ENCODE measurements at regions of chr2 and their contacts with region 1.

Region 1: GRCh38 chr2:70336552-70336951 is 34.7 kb upstream of the FAM136A start:
- DNase-seq: no peak
- H3K4me3 ChIP-seq: no peak overlapping the region
- H3K27ac ChIP-seq: no peak overlapping the region
- H3K4me1 ChIP-seq: no peaks in the 10 kb centered on the region
- H3K27me3 ChIP-seq: no peaks in the 10 kb centered on the region

Region 2: DNA sequence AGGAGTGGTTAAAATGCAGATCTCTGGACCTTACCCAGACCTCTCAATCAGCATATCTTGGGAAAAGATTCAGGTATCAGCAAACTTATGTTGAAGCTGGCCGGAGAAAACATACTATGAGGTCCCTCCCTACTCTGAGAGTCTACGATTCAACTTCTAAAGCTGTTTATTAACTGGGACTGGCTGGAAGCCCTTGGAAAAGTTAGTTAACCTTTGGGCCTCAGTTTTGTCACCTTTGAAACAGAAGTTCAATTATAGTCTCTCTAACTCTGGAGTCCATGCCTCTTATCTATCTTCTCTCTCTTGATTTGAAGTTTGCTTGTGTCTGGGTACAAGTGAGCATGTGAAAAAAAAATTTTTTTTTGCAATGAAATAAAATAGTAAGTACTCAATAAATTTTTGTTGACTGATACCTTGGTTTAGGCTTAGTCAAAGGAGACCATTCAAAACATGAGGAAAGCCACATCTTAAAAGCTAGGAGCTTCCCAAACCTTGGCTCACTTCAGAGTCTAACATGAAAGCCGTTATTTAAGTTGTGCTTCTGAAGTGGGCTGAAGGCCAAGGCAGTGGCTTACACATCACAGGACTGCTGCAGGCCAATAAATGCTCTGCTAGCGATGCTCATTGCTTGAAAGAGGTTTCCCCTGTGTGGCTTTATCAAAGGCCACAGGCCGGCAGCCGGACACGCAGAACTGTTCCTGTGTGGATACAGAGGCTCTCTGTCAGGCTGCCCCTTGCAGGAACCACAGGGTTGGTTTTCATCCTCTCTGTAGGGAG is 75.9 kb after region 1 on chr2:
- in situ Hi-C with region 1: no loop called
- DNase-seq: no peak
- H3K4me3 ChIP-seq: no peak overlapping the region
- H3K27ac ChIP-seq: no peak overlapping the region
- H3K4me1 ChIP-seq: no peaks in the 10 kb centered on the region
- H3K27me3 ChIP-seq: no peaks in the 10 kb centered on the region

Region 3: DNA sequence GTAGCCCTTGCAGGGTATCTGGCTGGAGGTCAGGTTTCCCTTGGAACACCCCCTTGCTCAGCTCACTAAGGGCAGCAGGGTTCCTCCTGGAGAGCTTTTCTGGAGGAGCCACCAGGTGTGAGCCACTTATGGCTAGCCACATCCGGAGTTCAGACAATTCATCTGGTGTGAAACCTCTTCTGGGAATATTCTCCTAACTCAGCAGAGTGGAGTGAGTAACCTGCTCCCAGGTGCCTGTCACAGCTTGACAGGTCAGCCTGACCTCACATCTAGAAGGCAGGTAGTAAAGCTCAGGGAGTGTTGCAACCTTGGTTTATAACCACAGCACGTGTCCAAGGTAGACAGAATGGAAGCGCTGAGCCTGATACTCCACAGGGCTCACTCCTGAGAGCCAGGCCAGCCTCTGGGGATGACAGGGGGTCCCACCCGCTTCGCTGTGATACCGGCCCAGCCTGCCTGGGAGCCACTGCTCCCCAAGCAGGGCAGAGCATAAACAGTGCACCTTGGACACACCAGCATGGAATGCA is 279.7 kb after region 1 on chr2:
- in situ Hi-C with region 1: loop called (anchors 10 kb)
- DNase-seq: no peak
- H3K4me3 ChIP-seq: no peak overlapping the region
- H3K27ac ChIP-seq: no peak overlapping the region
- H3K4me1 ChIP-seq: no peaks in the 10 kb centered on the region
- H3K27me3 ChIP-seq: peaks cover 14% of the 10 kb centered on the region; the same call in 1 of the 2 replicates